ACHN (cell line): ENCODE measurements at regions of chr6 and their contacts with region 1.

Region 1: GRCh38 chr6:154156135-154156896 is 117.3 kb downstream of the OPRM1 start:
- DNase-seq: peak; percentile 66

Region 2: DNA sequence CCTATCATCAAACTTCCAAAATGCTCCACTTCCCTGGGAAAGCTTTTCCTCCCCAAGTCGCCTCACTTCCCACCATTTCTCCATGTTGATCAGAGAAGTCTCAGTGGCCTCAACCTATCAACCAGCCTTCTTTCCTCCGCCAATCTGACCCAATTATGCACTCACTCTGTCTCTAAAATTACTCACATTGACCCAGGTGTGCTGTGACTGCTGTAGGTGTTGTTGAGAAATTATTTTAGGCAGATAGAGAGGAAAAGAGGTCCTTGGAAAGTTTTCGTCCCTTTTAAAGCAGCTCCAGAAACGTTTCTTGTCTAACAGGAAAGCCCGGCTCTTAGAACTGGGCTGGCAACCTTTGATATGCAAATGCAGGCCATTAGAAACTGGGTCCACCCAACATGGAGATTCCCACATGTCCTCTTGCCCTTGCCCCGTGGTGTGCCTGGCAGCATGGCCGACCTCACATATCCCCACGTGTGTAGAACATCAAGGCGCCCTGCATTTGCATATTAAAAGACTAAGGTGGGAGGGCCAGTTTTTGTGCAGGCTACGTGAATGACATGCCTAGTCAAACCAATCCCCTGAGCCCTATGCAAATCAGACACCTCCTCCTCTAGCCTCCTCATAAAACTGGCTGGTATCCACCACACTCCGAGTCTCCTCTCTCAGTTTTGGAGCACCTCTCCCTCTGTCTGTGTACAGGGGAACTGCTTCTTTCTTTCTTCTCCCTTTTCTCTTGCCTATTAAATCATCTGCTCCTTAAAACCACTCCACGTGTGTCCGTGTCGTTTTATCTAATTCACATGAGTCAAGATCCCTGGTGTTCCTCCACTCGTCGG is 187.4 kb after region 1 on chr6:
- in situ Hi-C with region 1: loop called (anchors 25 kb)
- DNase-seq: peak; percentile 80